ENCODE measurements at regions of chr2 and their contacts with region 1.

Region 1: DNA sequence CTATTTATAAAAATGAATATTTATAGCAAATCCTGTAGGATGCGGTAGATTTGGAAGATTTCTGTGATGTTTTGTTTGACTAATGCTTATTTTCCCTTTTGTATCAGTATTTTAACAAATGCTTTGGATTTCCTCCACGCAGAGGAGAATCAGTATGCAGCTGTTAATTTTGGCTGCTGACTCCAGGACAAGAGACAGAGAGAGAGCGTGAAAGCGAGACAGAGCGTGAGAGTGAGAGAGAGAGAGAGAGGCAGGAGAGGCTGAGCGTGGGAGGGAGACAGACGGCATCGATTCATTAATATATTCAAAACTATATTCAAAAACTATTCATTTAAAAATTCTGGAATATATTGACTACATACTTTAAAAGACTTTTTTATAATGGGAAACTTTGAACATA is 62.5 kb downstream of the RRM2 start:
- DNase-seq: no peak
- H3K4me3 ChIP-seq: no peak overlapping the region
- H3K27ac ChIP-seq: no peak overlapping the region
- H3K4me1 ChIP-seq: no peaks in the 10 kb centered on the region
- H3K27me3 ChIP-seq: no peaks in the 10 kb centered on the region
- CTCF ChIP-seq: no peak

Region 2: GRCh38 chr2:9630749-9631483 is 554.1 kb before region 1 on chr2 and contains the start of gene YWHAQ:
- CTCF ChIA-PET with region 1: no interaction called
- POLR2A ChIA-PET with region 1: no interaction called
- intact Hi-C with region 1: no loop called
- DNase-seq: peak; percentile 99
- H3K4me3 ChIP-seq: peak within 1 kb of the TSS; percentile 79
- H3K27ac ChIP-seq: peak within 1 kb of the TSS; percentile 95
- H3K4me1 ChIP-seq: peaks cover 13% of the 10 kb centered on the region
- H3K27me3 ChIP-seq: no peaks in the 10 kb centered on the region
- CTCF ChIP-seq: no peak
- total RNA-seq, gene YWHAQ: 505 and 533 TPM in 2 replicates

Region 3: GRCh38 chr2:10202131-10202665 is 17.2 kb after region 1 on chr2:
- CTCF ChIA-PET with region 1: interaction called, 12 read pairs
- POLR2A ChIA-PET with region 1: no interaction called
- intact Hi-C with region 1: no loop called
- DNase-seq: no peak
- H3K4me3 ChIP-seq: no peak overlapping the region
- H3K27ac ChIP-seq: no peak overlapping the region
- H3K4me1 ChIP-seq: no peaks in the 10 kb centered on the region
- H3K27me3 ChIP-seq: no peaks in the 10 kb centered on the region
- CTCF ChIP-seq: no peak

Region 4: GRCh38 chr2:10520154-10520553 is 335.1 kb after region 1 on chr2:
- CTCF ChIA-PET with region 1: no interaction called
- POLR2A ChIA-PET with region 1: no interaction called
- intact Hi-C with region 1: no loop called
- DNase-seq: no peak
- H3K4me3 ChIP-seq: no peak overlapping the region
- H3K27ac ChIP-seq: no peak overlapping the region
- H3K4me1 ChIP-seq: no peaks in the 10 kb centered on the region
- H3K27me3 ChIP-seq: no peaks in the 10 kb centered on the region
- CTCF ChIP-seq: no peak

Measured in A673 (cell line).